ENCODE measurements at regions of chr18 and their contacts with region 1.

Region 1: GRCh38 chr18:79378542-79379250 is 17.0 kb upstream of the NFATC1 start:
- DNase-seq: peak; percentile 79
- ATAC-seq: peak; percentile 87
- H3K4me3 Mint-ChIP-seq: no peak overlapping the region
- H3K27ac Mint-ChIP-seq: no peak overlapping the region
- H3K4me1 Mint-ChIP-seq: peaks cover 9% of the 10 kb centered on the region
- H3K27me3 Mint-ChIP-seq: no peaks in the 10 kb centered on the region

Region 2: DNA sequence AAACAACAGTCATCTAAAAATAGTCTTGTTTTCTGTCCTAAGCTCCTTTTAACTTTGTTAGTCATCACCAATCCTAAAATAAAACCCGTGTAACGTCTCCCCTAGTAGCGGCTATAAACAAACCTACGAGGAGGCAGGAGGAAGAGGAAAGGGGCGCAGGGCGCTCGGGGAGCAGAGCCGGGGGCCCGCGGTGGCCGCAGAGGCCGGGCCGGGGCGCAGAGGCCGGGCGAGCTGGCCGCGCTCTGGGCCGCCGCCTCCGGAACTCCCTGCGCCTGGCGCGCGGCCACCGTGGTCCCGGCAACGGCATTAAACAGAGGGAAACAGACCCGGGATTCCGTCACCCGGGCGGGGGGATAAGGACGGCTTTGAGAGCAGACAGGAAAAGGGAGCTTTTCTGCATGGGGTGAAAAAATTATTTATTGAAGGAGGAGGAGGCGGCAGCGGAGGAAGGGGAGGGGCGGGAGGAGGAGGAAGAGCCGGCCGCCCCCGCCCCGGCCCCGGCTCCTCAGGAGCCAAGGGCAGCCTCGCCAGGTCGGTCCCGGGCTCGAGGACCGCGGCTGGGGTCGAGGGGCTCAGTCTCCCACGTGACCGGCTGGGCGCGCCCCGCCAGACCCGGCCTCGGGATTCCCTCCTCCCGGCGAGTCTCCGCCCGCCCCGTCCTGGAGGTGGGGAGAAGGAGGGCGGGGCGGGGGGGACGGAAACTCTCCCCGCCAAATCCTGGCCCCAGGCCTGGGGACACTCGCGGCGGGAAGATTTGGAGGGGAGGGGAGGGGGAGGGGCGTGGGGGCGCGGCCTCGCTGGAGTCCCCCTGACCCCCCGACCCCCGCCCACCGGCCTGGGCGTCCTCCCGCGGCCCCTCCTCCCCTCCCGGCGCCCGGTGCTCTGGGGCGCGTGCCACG is 15.2 kb after region 1 on chr18:
- CTCF ChIA-PET with region 1: interaction called, 12 read pairs
- POLR2A ChIA-PET with region 1: no interaction called
- DNase-seq: peak; percentile 44
- ATAC-seq: peak; percentile 38
- H3K4me3 Mint-ChIP-seq: peak overlapping the region; percentile 74
- H3K27ac Mint-ChIP-seq: no peak overlapping the region
- H3K4me1 Mint-ChIP-seq: peaks cover 20% of the 10 kb centered on the region
- H3K27me3 Mint-ChIP-seq: peaks cover 33% of the 10 kb centered on the region

Region 3: DNA sequence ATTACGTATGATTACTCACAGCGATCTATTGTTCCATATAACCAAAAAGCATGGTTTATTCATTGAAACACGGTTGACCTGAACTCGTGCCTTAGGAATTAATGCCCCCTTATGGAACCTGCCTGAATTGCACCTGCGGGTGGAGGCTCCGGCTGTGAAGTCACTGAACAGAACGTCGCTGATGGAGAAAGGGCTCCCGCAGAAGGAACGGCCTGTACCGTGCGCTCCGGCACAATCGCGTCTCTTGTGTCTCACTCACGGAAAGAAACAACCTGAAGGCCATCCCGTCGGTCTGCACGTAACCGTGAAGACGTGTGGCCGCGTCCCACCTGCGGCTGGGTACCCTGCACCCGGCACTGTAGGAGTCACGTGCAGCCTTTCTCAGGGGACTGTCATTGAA is 150.2 kb after region 1 on chr18:
- CTCF ChIA-PET with region 1: interaction called, 70 read pairs
- POLR2A ChIA-PET with region 1: no interaction called
- DNase-seq: peak; percentile 79
- ATAC-seq: no peak
- H3K4me3 Mint-ChIP-seq: no peak overlapping the region
- H3K27ac Mint-ChIP-seq: no peak overlapping the region
- H3K4me1 Mint-ChIP-seq: peaks cover 17% of the 10 kb centered on the region
- H3K27me3 Mint-ChIP-seq: no peaks in the 10 kb centered on the region

Region 4: GRCh38 chr18:79644006-79644665 is 265.4 kb after region 1 on chr18:
- CTCF ChIA-PET with region 1: interaction called, 15 read pairs
- POLR2A ChIA-PET with region 1: no interaction called
- DNase-seq: peak; percentile 76
- ATAC-seq: peak; percentile 94
- H3K4me3 Mint-ChIP-seq: no peak overlapping the region
- H3K27ac Mint-ChIP-seq: no peak overlapping the region
- H3K4me1 Mint-ChIP-seq: peaks cover 6% of the 10 kb centered on the region
- H3K27me3 Mint-ChIP-seq: no peaks in the 10 kb centered on the region